Heart right ventricle (tissue), 16 donors: ENCODE measurements at regions of chr19 and their contacts with region 1.

Region 1: GRCh38 chr19:38142176-38143035 is 81.6 kb downstream of the DPF1 start:
- DNase-seq: peak; percentile 64
- ATAC-seq: peak in 7 of 8 donors; percentile 50 to 82 (median 76)
- H3K4me3 ChIP-seq: no peak overlapping the region
- H3K27ac ChIP-seq: no peak overlapping the region
- H3K4me1 ChIP-seq: no peaks in the 10 kb centered on the region
- H3K27me3 ChIP-seq: no peaks in the 10 kb centered on the region
- CTCF ChIP-seq: peak; percentile 29 to 75 (median 68)

Region 2: DNA sequence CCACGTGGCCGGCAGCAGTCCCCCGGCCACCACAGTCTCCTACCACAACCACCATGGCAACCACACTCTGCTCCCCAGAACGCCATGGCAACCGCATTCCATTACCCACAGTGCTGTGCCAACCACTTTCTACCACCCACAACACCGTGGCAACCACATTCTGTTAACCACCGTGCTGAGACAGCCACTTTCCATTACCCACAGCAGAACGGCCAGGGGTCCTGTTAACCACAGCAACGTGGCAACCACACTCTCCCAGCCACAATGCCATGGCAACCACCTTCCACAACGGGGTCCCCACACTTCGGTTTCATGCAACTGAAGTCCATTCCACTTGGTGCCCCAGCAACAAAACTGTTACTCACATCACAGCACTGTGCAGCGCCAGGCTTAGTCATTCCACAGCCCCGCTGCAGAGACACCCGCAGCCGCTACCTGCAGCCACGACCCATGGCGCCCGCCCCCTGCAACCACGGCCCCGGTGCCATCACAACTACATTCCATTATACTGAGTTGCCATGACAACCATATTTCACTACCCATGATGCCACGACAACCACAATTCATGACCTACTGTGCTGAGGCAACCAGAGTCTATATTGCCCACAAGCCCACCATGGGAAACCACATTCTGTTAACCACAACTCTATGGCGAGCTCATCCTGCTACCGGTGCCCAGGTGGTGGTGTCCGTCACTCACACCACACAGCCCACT is 71.7 kb after region 1 on chr19:
- intact Hi-C with region 1: loop called in 1 of 10 experiments (anchors 10 kb)
- DNase-seq: no peak
- ATAC-seq: no peak
- H3K4me3 ChIP-seq: no peak overlapping the region
- H3K27ac ChIP-seq: no peak overlapping the region
- H3K4me1 ChIP-seq: peaks cover under 1 to 25% (median 21%) of the 10 kb centered on the region in 9 donors
- H3K27me3 ChIP-seq: peaks cover 7 to 62% (median 31%) of the 10 kb centered on the region in 7 donors
- CTCF ChIP-seq: no peak

Region 3: DNA sequence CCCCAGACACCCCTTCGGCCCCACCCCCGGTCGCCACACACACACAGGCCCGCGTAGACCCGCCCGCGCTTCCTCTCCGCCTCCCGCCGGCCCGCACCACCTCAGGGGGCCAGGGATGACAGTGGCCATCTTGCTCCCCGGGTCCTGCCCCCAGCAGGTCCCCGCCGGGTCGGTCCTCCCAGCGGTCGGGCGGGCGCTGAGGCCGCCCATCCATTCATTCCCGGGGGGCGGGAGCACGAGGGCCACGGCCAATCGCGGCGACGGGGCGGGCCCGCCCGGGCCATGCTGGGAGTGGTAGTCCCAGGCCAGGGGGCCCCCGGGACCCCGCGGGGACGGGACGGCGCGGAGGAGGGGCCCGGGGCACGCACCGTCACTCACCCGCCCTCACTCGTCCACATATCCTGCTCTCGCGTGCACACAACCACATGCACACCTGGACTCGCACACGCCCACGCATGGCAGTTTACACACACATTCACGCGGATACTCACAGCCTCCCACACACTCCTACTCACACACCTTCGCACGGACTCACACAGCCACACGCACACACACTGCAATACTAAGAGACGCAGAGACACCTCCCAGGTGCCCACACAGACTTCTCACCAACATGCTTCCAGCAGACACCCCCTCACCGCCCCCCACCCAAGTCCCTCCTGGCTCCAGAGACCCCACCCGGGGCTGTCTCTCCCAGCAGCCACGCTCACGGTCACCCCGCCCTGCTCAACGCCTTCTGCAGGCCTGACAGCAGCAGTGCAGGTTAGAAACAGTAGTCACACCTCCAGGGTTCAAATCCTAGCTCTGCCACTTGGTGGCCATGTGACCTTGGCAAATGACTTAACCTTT is 81.8 kb after region 1 on chr19 and contains the start of gene DPF1:
- intact Hi-C with region 1: loop called in 4 of 10 experiments (anchors 2 to 10 kb)
- DNase-seq: peak; percentile 35 to 50
- ATAC-seq: peak; percentile 48 to 84 (median 74)
- H3K4me3 ChIP-seq: peak within 1 kb of the TSS in 9 of 10 donors; percentile 29 to 55 (median 50)
- H3K27ac ChIP-seq: no peak within 1 kb of the TSS
- H3K4me1 ChIP-seq: peaks cover 3 to 27% (median 22%) of the 10 kb centered on the region in 9 donors
- H3K27me3 ChIP-seq: peaks cover 13 to 86% (median 81%) of the 10 kb centered on the region in 7 donors
- CTCF ChIP-seq: no peak
- total RNA-seq, gene DPF1: 0.16 to 0.72 (median 0.30) TPM in 6 of 10 donors, not detected in the others

Region 4: GRCh38 chr19:38229585-38230073 is 87.2 kb after region 1 on chr19:
- intact Hi-C with region 1: loop called in 5 of 10 experiments (anchors 2 to 10 kb)
- DNase-seq: peak; percentile 52 to 68
- ATAC-seq: peak; percentile 85 to 92 (median 86)
- H3K4me3 ChIP-seq: peak overlapping the region in 7 of 10 donors; percentile 21 to 42 (median 37)
- H3K27ac ChIP-seq: no peak overlapping the region
- H3K4me1 ChIP-seq: peaks cover 3 to 17% (median 13%) of the 10 kb centered on the region in 9 donors
- H3K27me3 ChIP-seq: peaks cover 0 to 79% (median 57%) of the 10 kb centered on the region in 7 donors
- CTCF ChIP-seq: peak in 1 of 9 donors; percentile 4